AG04449 (cell line): ENCODE measurements at regions of chr3 and their contacts with region 1.

Region 1: DNA sequence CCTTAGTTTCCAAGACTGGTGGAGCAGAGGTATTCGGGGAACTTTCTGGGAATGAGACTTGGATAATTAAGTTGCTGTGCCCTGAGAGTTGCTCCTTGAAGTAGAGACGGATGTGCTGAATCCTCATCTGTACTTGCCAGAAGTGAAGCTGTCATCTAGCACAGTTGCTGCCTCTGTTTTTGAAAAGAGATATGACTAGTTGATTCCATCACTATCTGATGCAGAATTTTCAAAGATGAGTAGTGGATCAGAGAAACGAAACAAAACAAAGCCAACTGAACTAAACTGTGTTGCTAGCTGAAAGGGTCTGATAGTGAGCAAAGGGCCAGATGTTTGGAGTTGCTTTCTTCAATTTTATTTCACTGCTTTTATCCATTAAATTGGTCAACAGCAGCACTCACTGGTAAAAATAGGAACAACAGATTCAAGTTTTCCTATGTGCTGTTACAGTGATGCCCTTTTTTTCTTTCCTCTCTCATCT is 52.7 kb downstream of the MITF start:
- DNase-seq: no peak
- H3K4me3 ChIP-seq: no peak overlapping the region
- CTCF ChIP-seq: peak; percentile 32

Region 2: DNA sequence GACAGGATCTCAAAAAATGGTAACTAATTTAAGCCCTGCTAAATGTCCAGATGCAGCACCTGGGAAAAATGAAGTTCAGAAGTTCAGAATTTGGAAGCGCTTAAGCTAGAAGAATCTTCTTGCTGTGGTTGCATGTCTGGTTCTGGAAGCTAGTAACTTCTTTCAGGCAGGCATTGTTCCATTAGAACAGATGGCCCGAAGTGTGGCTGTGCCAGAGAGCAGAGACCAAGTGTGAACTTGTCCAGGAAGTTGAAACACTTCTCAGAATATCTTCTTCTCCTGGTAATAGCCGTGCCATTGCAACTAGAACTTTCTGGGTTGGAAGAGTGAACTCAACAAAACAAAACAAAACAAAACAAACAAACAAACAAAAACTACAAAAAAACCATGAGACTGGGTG is 27.3 kb after region 1 on chr3:
- CTCF ChIA-PET with region 1: no interaction called
- POLR2A ChIA-PET with region 1: no interaction called
- DNase-seq: no peak
- H3K4me3 ChIP-seq: no peak overlapping the region
- CTCF ChIP-seq: no peak

Region 3: GRCh38 chr3:69948246-69948862 is 156.4 kb after region 1 on chr3:
- CTCF ChIA-PET with region 1: interaction called, 10 read pairs
- POLR2A ChIA-PET with region 1: no interaction called
- DNase-seq: no peak
- H3K4me3 ChIP-seq: no peak overlapping the region
- CTCF ChIP-seq: peak; percentile 22